Activated CD4-positive, alpha-beta memory T cell treated with anti-CD3 and anti-CD28 coated beads for 36 hours (primary cell): ENCODE measurements at regions of chr2 and their contacts with region 1.

Region 1: DNA sequence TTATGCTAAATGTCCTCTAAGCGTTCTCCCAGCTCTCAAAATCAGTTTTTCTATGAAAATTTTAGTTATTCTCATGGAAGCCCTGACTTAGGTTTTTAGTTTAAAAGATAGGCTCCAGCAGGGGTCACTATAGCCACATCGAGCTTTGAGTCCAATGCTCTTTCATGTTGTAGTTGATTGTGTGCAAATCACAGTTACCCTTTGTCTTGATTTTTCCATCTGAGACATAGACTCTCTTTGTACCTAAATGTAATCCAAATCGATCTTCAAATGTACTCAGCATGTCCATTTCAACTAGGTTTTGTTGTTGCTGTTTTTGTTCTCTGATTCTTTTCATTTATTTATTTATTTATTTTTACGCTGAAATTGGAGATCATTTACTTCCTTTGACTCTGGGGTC is 26.4 kb upstream of the MSTN start:
- DNase-seq: peak; percentile 52
- H3K4me3 Mint-ChIP-seq: no peak overlapping the region
- H3K27ac Mint-ChIP-seq: no peak overlapping the region
- H3K4me1 Mint-ChIP-seq: no peaks in the 10 kb centered on the region
- H3K27me3 Mint-ChIP-seq: no peaks in the 10 kb centered on the region

Region 2: DNA sequence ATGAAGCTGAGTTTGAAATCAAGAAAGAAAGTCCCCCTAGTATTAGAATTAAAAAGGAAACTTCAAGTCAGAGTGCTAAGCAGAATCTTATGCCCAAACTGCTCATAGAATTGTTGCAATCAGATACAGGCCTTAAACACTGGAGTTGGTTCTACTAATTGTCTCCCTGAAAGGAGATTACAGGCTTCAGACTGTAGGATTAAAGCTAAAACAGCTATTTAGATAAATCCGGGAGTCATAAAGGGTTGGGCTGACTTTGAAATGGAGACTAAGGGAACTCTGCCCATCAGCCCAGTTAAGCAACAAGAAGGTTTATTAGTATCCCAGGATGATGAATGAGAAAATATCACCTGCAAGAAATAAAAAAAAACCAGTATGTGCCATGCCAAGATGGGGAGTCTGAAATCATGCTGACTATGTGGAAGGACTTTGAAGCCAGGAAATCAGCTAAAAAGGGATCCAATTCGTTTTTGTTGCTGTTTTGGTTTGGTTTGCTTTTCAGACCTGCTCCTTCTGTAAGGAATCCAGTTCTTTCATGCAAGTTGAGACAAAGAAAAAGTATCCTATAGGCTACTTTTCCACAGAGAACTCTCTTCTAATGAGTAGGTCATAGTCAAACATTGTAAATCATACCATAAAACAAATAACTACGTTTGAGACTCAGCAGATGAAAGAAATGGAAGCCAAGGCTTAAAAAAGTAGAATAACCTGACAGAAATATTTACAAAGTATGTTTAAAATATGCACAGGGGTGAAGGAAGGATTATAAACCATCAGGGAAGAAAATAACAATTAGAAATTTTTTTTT is 11.2 kb after region 1 on chr2:
- CTCF ChIA-PET with region 1: interaction called, 13 read pairs
- POLR2A ChIA-PET with region 1: no interaction called
- intact Hi-C with region 1: no loop called
- DNase-seq: no peak
- H3K4me3 Mint-ChIP-seq: no peak overlapping the region
- H3K27ac Mint-ChIP-seq: no peak overlapping the region
- H3K4me1 Mint-ChIP-seq: no peaks in the 10 kb centered on the region
- H3K27me3 Mint-ChIP-seq: peaks cover 6% of the 10 kb centered on the region

Region 3: DNA sequence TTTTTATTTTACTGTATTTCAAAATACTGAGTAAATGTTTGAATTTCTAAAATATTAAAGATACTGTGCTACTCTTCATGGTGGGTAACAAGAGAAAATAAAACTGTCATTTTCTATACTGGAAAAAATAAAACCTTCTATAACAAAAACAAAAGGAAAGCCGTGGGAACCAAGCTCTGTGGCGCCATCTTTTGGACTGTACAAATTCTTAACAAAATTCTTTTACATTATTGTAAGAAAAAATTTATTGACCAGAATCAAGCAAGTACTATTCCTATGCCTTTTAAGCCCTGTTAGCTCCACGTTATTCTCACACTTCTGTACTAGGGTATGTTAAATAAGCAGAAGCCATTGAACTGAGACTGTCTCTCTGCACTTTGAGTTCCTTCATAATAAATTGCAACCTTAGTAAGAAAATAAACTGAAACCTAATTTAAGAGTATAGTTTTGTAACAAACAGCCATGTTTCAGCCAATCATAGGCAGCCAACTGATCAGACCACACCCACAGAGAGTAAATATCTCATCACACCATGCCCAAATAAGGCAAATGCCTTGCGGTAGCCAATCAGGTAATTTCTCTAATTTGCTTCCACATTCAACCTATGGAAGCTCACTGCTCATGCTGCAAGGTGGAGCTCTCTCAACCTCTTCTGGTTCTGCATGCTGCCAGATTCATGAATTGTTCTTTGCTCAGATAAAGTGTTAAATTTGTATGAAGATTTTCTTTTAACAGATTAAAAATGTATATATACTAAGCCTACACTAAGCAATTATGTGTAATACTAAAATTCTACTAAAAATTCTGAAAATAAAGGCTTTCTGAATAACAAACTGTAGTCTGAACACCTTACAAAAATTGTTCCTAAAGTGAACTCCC is 188.6 kb after region 1 on chr2:
- CTCF ChIA-PET with region 1: interaction called, 18 read pairs
- POLR2A ChIA-PET with region 1: no interaction called
- intact Hi-C with region 1: loop called (anchors 1 kb)
- DNase-seq: peak; percentile 25
- H3K4me3 Mint-ChIP-seq: no peak overlapping the region
- H3K27ac Mint-ChIP-seq: no peak overlapping the region
- H3K4me1 Mint-ChIP-seq: no peaks in the 10 kb centered on the region
- H3K27me3 Mint-ChIP-seq: no peaks in the 10 kb centered on the region

Region 4: DNA sequence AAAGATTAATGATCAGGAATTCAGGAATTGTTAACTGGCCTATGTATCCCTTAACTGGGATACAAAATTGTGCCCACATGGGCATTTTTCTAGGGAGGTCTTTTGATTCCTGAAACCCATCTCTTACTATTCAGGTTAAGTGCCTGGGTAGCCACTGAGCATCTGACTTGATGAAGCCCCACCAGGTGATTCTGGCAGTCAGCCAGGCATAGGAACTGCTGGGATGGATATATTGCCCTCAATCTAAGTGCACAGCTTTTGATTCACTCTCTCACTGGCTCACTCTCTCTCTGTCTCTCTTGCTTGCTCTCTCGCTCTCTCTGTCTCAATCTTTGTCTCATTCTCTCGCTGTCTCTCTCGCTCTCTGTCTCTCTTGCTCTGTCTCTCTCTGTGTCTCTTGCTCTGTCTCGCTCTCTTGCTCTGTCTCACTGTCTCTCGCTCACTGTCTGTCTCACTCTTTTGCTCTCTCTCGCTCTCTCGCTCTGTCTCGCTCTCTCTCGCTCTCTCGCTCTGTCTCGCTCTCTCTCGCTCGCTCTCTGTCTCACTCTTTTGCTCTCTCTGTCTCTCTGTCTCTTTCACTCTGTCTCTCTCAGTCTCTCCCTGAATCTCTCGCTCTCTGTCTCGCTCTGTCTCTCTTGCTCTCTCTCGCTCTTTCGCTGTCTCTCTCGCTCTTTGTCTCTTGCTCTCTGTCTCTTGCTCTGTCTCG is 276.7 kb after region 1 on chr2:
- CTCF ChIA-PET with region 1: interaction called, 11 read pairs
- POLR2A ChIA-PET with region 1: no interaction called
- intact Hi-C with region 1: no loop called
- DNase-seq: no peak
- H3K4me3 Mint-ChIP-seq: no peak overlapping the region
- H3K27ac Mint-ChIP-seq: no peak overlapping the region
- H3K4me1 Mint-ChIP-seq: peaks cover 5% of the 10 kb centered on the region
- H3K27me3 Mint-ChIP-seq: no peaks in the 10 kb centered on the region

Region 5: DNA sequence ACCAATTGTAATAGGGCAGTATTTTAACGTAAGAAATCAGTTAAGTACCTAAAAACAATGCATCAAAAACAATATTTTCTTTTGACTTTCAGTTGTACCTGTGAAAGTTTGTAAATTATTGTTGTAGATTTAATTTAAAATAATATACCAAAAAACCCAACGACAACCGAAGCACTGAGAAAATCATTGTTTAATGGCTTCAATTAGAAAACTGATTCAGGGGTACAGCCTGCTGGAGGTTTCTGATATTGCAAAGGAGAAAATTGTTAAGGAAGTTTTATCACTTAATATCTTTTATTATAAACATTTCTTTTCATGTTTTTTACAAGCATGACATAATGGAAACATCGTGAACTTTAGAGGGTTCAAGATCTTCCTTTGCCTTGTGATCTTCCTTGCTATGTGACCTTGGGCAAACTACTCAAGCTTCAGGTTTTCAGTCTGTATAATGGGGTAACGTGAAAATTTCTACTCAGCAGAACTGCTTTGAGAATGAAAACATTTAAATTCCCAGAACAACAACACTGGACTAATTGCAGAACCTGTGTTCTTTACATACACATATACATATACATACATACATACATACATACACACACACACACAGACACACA is 715.4 kb after region 1 on chr2:
- CTCF ChIA-PET with region 1: no interaction called
- POLR2A ChIA-PET with region 1: no interaction called
- intact Hi-C with region 1: loop called (anchors 5 kb)
- DNase-seq: no peak
- H3K4me3 Mint-ChIP-seq: no peak overlapping the region
- H3K27ac Mint-ChIP-seq: no peak overlapping the region
- H3K4me1 Mint-ChIP-seq: peaks cover 9% of the 10 kb centered on the region
- H3K27me3 Mint-ChIP-seq: no peaks in the 10 kb centered on the region